Heart right ventricle (tissue), 16 donors: ENCODE measurements at regions of chr6 and their contacts with region 1.

Region 1: DNA sequence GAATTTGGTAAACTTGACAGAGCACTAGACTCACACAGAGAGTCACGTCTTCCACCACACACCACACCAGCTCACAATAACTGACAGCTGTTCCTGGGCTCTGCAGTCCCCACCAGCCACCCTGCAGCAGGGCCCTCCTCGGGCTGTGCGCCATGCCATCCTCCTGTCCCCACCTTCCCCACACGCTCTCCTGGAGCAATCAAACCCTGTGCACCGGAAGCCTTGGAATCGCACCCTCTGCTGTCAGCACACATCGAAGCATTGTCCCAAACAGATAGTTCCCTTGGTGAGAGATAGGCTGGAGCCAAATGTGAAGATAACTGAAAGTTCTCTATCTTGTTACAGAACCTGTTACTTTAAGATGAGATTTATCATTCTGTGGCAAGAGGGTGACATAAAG is 190.9 kb downstream of the TBXT start:
- DNase-seq: no peak
- ATAC-seq: peak in 3 of 8 donors; percentile 46 to 65 (median 51)
- H3K4me3 ChIP-seq: no peak overlapping the region
- H3K27ac ChIP-seq: no peak overlapping the region
- H3K4me1 ChIP-seq: peaks cover 0 to 13% (median 0%) of the 10 kb centered on the region in 9 donors
- H3K27me3 ChIP-seq: no peaks in the 10 kb centered on the region
- CTCF ChIP-seq: no peak

Region 2: GRCh38 chr6:165961233-165961632 is 15.5 kb before region 1 on chr6:
- intact Hi-C with region 1: no loop called
- DNase-seq: no peak
- ATAC-seq: no peak
- H3K4me3 ChIP-seq: no peak overlapping the region
- H3K27ac ChIP-seq: no peak overlapping the region
- H3K4me1 ChIP-seq: no peaks in the 10 kb centered on the region
- H3K27me3 ChIP-seq: no peaks in the 10 kb centered on the region
- CTCF ChIP-seq: no peak

Region 3: DNA sequence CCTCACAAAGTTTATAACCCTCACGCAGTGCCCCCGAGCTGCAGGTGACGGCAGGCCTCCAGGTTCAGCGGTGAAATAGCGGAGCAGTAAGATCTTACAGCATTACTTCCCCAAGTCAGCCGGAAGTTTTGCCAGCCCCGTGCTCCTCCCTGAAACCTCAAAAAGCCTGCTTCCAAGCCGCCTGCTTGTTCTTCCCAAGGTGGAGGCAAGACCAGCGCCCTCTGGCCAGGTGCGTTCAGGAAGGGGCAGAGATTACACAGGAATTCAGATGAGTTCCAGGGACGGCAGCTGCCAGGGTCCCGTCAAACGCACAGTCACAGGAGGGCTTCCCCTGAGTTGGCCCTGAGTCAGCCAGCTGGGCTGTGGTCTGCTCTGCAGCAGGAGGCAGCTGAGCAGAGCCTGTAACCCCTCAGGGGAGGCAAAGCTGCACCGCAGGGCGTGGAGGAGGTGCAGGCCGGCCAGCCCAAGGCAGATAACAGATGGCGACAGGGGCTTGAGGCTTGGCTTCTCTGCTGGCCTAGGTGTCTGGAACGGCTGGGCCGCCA is 774.4 kb after region 1 on chr6:
- intact Hi-C with region 1: loop called in 1 of 10 experiments (anchors 10 kb)
- DNase-seq: no peak
- ATAC-seq: no peak
- H3K4me3 ChIP-seq: no peak overlapping the region
- H3K27ac ChIP-seq: no peak overlapping the region
- H3K4me1 ChIP-seq: peaks cover 0 to 8% (median 0%) of the 10 kb centered on the region in 9 donors
- H3K27me3 ChIP-seq: peaks cover 0 to 23% (median 0%) of the 10 kb centered on the region in 7 donors
- CTCF ChIP-seq: no peak